ENCODE measurements at regions of chr21 and their contacts with region 1.

Region 1: DNA sequence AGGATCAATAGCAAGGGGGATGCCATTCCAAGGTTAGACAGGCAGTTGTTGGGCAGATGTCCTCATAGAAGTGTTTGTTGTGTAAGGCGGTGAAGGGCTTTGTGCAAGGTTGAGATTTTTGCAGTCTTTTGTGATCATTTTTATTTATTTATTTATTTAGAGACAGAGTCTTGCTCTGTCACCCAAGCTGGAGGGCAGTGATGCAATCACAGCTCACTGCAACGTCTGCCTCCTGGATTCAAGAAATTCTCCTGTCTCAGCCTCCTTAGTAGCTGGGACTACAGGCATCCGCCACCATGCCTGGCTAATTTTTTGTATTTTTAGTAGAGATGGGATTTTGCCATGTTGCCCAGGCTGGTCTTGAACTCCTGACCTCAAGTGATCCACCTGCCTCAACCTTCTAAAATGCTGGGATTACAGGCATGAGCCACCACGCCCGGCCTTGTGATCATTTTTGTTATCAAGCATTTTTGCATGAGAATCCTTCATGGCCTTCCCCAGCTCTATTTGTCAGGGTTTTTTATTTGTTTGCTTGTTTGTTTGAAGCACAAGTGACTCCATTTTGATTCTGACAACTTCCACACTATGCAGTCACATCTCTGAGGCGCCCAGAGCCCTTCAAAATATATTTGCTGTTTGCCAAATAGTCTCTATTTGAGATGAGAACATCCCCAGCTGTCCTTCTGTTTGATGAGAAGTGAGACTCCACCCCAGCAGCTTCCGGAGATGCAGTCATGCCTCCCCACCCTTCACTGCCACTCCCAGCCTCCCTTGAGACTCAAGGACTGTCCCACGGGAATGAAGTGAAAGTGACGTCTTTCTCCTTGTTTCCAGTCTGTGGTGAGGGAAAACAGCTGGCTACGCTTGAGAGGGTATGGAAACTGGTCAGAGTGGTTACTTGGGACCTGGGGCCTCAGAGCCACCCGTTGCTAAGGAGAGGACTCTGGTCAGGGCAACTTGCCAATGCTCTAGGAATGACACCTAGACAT is 38.0 kb downstream of the TMEM50B start:
- DNase-seq: no peak
- ATAC-seq: no peak
- H3K4me3 Mint-ChIP-seq: no peak overlapping the region
- H3K27ac Mint-ChIP-seq: peak overlapping the region; percentile 12
- H3K4me1 Mint-ChIP-seq: peaks cover 5% of the 10 kb centered on the region
- H3K27me3 Mint-ChIP-seq: no peaks in the 10 kb centered on the region

Region 2: GRCh38 chr21:32834916-32835235 is 606.9 kb before region 1 on chr21:
- CTCF ChIA-PET with region 1: no interaction called
- POLR2A ChIA-PET with region 1: no interaction called
- intact Hi-C with region 1: loop called in 1 of 2 experiments (anchors 5 kb)
- DNase-seq: no peak
- ATAC-seq: no peak
- H3K4me3 Mint-ChIP-seq: no peak overlapping the region
- H3K27ac Mint-ChIP-seq: no peak overlapping the region
- H3K4me1 Mint-ChIP-seq: peaks cover 2% of the 10 kb centered on the region
- H3K27me3 Mint-ChIP-seq: no peaks in the 10 kb centered on the region

Region 3: DNA sequence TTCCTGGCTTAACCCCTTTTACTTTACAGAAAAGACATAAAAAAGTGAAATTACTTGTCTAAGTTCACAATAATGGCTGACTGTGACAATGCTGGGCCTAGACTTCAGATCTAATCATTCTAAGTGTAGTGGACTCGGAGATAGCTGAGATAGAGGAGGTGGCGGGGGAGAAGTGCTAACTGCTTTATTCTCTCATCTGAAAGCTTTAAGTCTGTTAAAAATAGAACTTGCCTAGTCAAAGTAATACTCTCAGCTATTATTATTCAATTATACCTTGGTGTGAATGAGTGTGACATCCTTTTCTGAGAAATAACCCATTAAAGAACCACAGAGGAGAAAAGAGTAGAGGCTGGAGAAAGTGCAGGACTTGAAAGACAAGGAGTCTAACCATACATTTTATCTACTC is 512.1 kb before region 1 on chr21:
- CTCF ChIA-PET with region 1: no interaction called
- POLR2A ChIA-PET with region 1: no interaction called
- intact Hi-C with region 1: loop called in 1 of 2 experiments (anchors 10 kb)
- DNase-seq: peak; percentile 12
- ATAC-seq: peak; percentile 21
- H3K4me3 Mint-ChIP-seq: peak overlapping the region; percentile 6
- H3K27ac Mint-ChIP-seq: peak overlapping the region; percentile 48
- H3K4me1 Mint-ChIP-seq: peaks cover 35% of the 10 kb centered on the region
- H3K27me3 Mint-ChIP-seq: peaks cover 2% of the 10 kb centered on the region

Region 4: DNA sequence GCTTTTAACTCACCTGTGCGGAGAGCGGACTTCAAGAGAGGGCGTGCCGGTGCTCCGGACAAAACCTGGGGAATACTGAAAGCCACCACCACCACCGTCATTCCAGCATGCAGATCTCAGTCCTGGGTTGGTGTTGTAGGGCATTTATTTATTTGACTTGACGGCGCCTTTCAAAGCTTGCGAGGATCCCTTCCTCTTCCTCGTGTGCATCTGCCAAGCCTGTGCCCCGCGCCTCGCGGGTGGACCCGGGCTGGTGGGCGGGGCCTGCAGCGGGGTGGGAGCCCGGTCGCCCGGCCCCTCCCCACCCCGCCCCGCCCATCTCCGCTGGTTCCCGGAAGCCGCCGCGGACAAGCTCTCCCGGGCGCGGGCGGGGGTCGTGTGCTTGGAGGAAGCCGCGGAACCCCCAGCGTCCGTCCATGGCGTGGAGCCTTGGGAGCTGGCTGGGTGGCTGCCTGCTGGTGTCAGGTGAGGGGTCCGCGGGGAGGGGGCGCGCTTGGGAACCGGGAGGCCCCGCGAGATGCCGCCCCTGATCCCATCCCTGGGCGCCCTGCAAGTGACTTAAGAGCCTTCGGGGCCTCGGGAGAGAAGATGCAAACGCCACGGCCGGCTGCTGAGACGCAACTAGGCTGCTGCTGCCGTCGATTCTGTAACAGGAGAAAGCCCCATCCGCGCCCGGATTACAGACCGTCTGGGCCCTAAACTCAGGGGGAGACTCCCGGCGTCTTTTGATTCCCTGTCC is 175.6 kb before region 1 on chr21 and contains the start of gene IL10RB:
- CTCF ChIA-PET with region 1: no interaction called
- POLR2A ChIA-PET with region 1: interaction called, 3 read pairs
- intact Hi-C with region 1: loop called in 1 of 2 experiments (anchors 1 kb)
- DNase-seq: peak; percentile 84
- ATAC-seq: peak; percentile 64
- H3K4me3 Mint-ChIP-seq: peak within 1 kb of the TSS; percentile 90
- H3K27ac Mint-ChIP-seq: peak within 1 kb of the TSS; percentile 92
- H3K4me1 Mint-ChIP-seq: peaks cover 42% of the 10 kb centered on the region
- H3K27me3 Mint-ChIP-seq: no peaks in the 10 kb centered on the region
- total RNA-seq, gene IL10RB: 22.8 to 25.0 TPM

Region 5: GRCh38 chr21:33348706-33349105 is 93.1 kb before region 1 on chr21:
- CTCF ChIA-PET with region 1: interaction called, 32 read pairs
- POLR2A ChIA-PET with region 1: no interaction called
- intact Hi-C with region 1: no loop called
- DNase-seq: no peak
- ATAC-seq: no peak
- H3K4me3 Mint-ChIP-seq: no peak overlapping the region
- H3K27ac Mint-ChIP-seq: no peak overlapping the region
- H3K4me1 Mint-ChIP-seq: peaks cover 8% of the 10 kb centered on the region
- H3K27me3 Mint-ChIP-seq: no peaks in the 10 kb centered on the region

Region 6: DNA sequence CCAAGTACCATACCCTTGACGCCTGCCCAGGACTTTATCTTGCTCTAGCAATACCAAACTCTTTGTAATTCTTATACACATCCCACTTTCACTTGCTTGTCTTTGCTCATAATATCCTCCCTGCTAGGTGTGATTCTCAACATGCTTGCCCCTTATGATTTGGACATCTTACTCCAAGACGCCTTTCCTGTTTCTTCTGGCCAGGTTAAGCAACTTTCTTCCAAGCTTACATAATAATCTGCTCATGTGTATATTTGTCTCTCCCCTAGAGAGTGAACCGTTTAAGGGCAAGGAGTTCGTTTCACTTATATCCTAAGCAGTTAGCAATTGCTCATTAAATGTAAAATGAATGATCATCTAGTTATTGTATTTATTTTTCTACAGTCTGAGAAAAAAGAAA is 177.9 kb after region 1 on chr21:
- CTCF ChIA-PET with region 1: no interaction called
- POLR2A ChIA-PET with region 1: no interaction called
- intact Hi-C with region 1: no loop called
- DNase-seq: no peak
- ATAC-seq: no peak
- H3K4me3 Mint-ChIP-seq: no peak overlapping the region
- H3K27ac Mint-ChIP-seq: no peak overlapping the region
- H3K4me1 Mint-ChIP-seq: no peaks in the 10 kb centered on the region
- H3K27me3 Mint-ChIP-seq: no peaks in the 10 kb centered on the region

Measured in activated CD4-positive, alpha-beta T cell treated with anti-CD3 and anti-CD28 coated beads for 36 hours (primary cell).